CD4-positive, alpha-beta memory T cell (primary cell): ENCODE measurements at regions of chr3 and their contacts with region 1.

Region 1: DNA sequence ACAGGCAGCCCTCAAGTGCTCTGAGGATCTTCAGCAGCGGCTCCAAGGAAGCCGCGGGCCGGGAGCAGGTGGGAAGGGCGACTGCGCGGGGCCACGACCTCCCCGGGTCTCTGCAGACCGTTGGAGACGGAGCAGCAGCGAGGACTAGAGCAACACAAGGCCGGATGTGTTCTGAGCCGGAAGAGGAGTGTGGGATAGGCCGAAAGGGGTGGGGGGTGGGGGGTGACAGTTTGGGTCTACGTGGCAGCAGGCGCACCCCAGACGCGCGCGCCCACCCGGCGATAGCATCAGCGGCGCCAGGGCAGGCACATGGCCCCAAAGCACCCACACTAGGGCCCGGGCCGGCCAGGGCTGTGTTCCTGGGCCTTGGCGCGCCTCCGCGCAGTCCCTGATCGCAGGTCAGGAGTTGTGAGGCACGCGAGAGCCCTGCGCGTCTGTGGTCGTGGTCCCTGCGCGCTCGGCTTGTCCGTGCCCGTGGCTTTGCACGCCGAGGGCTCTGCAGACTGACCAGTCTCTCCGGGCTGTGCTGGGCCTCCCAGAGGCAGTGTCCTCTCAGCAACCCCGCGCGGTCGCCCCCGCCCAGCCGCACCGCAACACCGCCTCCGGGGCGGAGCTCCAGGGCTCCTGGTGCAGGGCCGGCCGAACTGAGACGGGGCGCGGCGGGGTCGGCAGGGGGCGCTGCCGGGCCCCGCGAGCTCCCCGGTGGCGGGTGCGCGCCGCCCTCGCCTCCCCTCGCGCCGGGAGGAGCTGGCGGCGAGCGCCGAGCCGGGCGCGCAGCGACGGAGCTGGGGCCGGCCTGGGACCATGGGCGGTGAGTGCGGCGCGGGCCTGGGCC is at the start of gene PXYLP1:
- DNase-seq: peak; percentile 88 to 90 (median 89)
- H3K4me3 ChIP-seq: peak within 1 kb of the TSS; percentile 38 to 93
- H3K4me3 Mint-ChIP-seq: peak within 1 kb of the TSS; percentile 87 to 98 (median 93)
- H3K27ac ChIP-seq: peak within 1 kb of the TSS; percentile 81
- H3K27ac Mint-ChIP-seq: peak within 1 kb of the TSS; percentile 92 to 98 (median 96)
- H3K4me1 ChIP-seq: peaks cover 27% of the 10 kb centered on the region
- H3K4me1 Mint-ChIP-seq: peaks cover 28 to 59% (median 43%) of the 10 kb centered on the region in 4 donors
- H3K27me3 ChIP-seq: no peaks in the 10 kb centered on the region
- H3K27me3 Mint-ChIP-seq: peaks cover 0 to 2% of the 10 kb centered on the region in 2 donors
- total RNA-seq, gene PXYLP1: 17.2 to 22.6 TPM

Region 2: DNA sequence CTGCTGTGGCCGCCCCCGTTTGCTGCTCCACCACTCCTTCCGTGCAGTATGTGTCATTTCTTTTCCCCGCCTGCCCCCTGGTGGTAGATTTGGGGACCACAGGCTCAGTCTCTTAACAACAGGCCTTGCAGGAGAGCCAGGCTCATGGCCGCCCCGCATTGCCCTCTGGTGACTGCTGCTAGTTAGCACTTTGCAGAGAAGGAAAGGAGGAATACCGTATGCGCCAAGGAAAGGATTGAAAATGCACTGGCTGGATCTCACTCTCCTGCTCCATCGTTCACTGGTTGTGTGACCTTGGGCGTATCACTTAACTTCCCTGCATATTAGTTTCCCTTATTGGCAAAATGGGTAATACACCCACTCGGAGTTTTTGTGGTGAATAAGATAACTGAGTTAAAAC is 39.0 kb before region 1 on chr3:
- CTCF ChIA-PET with region 1: interaction called, 6 read pairs
- POLR2A ChIA-PET with region 1: interaction called, 3 read pairs
- intact Hi-C with region 1: loop called (anchors 2 kb)
- DNase-seq: peak; percentile 91 to 93 (median 91)
- H3K4me3 ChIP-seq: no peak overlapping the region
- H3K4me3 Mint-ChIP-seq: no peak overlapping the region
- H3K27ac ChIP-seq: no peak overlapping the region
- H3K27ac Mint-ChIP-seq: peak overlapping the region in 5 of 7 donors; percentile 2 to 78 (median 33)
- H3K4me1 ChIP-seq: peaks cover 6% of the 10 kb centered on the region
- H3K4me1 Mint-ChIP-seq: peaks cover 5 to 14% (median 9%) of the 10 kb centered on the region in 4 donors
- H3K27me3 ChIP-seq: no peaks in the 10 kb centered on the region
- H3K27me3 Mint-ChIP-seq: peaks cover 13 to 14% of the 10 kb centered on the region in 2 donors

Region 3: DNA sequence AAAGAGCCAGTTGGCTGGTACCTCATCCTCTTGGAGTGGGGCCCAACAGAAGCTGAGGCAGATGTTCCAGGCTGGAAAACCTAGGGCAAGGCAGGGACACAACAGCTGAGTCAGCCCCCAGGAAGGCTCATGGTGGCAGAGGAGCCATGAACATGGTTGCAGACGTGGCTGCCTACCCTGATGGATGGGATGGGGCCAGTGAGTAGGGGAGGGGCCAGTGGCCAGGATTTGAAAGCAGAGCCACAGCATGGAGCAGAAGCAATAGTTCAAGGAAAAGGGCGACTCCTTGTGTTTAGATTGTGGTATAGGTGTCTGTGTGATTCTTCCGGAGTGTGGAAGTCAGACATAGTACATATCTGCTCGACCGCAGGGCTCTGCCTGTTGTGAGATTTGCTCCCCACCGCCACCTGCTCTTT is 24.5 kb after region 1 on chr3:
- CTCF ChIA-PET with region 1: interaction called, 180 read pairs
- POLR2A ChIA-PET with region 1: interaction called, 34 read pairs
- intact Hi-C with region 1: loop called (anchors 1 kb)
- DNase-seq: peak; percentile 55 to 62 (median 56)
- H3K4me3 ChIP-seq: no peak overlapping the region
- H3K4me3 Mint-ChIP-seq: peak overlapping the region in 4 of 8 donors; percentile 5 to 58 (median 12)
- H3K27ac ChIP-seq: no peak overlapping the region
- H3K27ac Mint-ChIP-seq: peak overlapping the region in 6 of 7 donors; percentile 2 to 77 (median 32)
- H3K4me1 ChIP-seq: no peaks in the 10 kb centered on the region
- H3K4me1 Mint-ChIP-seq: peaks cover 11 to 15% (median 12%) of the 10 kb centered on the region in 4 donors
- H3K27me3 ChIP-seq: no peaks in the 10 kb centered on the region
- H3K27me3 Mint-ChIP-seq: no peaks in the 10 kb centered on the region

Region 4: GRCh38 chr3:141279077-141279967 is 48.0 kb after region 1 on chr3:
- CTCF ChIA-PET with region 1: interaction called, 47 read pairs
- POLR2A ChIA-PET with region 1: interaction called, 40 read pairs
- intact Hi-C with region 1: loop called (anchors 1 kb)
- DNase-seq: peak in 4 of 5 donors; percentile 24 to 39 (median 26)
- H3K4me3 ChIP-seq: no peak overlapping the region
- H3K4me3 Mint-ChIP-seq: peak overlapping the region in 2 of 8 donors; percentile 2 to 14
- H3K27ac ChIP-seq: no peak overlapping the region
- H3K27ac Mint-ChIP-seq: peak overlapping the region in 2 of 7 donors; percentile 36 to 48
- H3K4me1 ChIP-seq: peaks cover 18% of the 10 kb centered on the region
- H3K4me1 Mint-ChIP-seq: peaks cover 16 to 25% (median 19%) of the 10 kb centered on the region in 4 donors
- H3K27me3 ChIP-seq: no peaks in the 10 kb centered on the region
- H3K27me3 Mint-ChIP-seq: no peaks in the 10 kb centered on the region

Region 5: DNA sequence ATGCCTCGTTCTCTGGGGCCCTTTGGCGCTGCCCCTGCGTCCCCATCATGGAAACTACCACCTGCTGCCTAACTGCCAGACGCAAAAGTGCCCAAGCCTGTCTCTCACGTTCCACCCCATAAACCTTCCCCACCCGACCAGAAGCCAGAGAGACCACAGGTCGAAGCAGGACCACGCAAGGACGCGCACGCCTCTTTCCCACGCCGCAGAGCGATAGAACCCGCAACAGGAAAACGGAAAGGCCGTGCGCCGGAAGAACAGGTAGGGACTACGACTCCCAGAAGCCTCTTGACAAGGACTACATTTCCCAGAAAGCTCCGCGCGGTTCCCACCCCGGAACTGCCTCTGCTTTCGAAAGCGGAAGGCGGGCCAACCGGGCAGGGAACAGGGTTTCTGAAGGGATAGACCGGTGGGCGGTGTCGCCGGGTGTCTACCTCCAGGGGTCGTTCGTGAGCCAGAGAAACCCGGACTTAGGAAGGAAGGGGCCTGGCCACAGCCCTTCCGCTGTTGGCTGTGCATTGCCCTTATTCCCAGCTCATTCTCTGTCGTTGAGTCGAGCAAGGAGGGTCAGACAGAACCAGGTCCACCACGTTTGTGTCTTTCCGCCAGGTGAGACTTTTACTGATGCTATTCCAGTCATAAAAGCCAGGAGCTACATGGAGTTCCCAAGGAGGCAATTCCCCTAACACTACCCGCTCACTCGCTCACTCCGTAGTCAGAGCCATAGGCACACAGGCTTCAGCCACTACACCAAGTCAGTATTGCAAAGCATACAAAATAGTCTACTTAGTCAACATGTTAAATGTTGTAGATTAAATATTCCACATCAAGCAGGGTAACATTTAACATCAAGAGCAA is 80.4 kb after region 1 on chr3:
- CTCF ChIA-PET with region 1: interaction called, 5 read pairs
- POLR2A ChIA-PET with region 1: interaction called, 16 read pairs
- intact Hi-C with region 1: no loop called
- DNase-seq: peak; percentile 97 to 99 (median 98)
- H3K4me3 ChIP-seq: peak overlapping the region; percentile 68 to 73
- H3K4me3 Mint-ChIP-seq: peak overlapping the region; percentile 92 to 100 (median 98)
- H3K27ac ChIP-seq: peak overlapping the region; percentile 66
- H3K27ac Mint-ChIP-seq: peak overlapping the region; percentile 89 to 99 (median 97)
- H3K4me1 ChIP-seq: peaks cover 46% of the 10 kb centered on the region
- H3K4me1 Mint-ChIP-seq: peaks cover 32 to 60% (median 49%) of the 10 kb centered on the region in 4 donors
- H3K27me3 ChIP-seq: no peaks in the 10 kb centered on the region
- H3K27me3 Mint-ChIP-seq: no peaks in the 10 kb centered on the region

Region 6: GRCh38 chr3:142578327-142579223 is 1347.3 kb after region 1 on chr3 and contains the start of gene ATR:
- CTCF ChIA-PET with region 1: no interaction called
- POLR2A ChIA-PET with region 1: interaction called, 3 read pairs
- intact Hi-C with region 1: loop called (anchors 10 kb)
- DNase-seq: peak; percentile 95 to 96 (median 96)
- H3K4me3 ChIP-seq: peak within 1 kb of the TSS; percentile 90 to 100
- H3K4me3 Mint-ChIP-seq: peak within 1 kb of the TSS; percentile 93 to 99 (median 98)
- H3K27ac ChIP-seq: peak within 1 kb of the TSS; percentile 94
- H3K27ac Mint-ChIP-seq: peak within 1 kb of the TSS; percentile 91 to 99 (median 99)
- H3K4me1 ChIP-seq: peaks cover 44% of the 10 kb centered on the region
- H3K4me1 Mint-ChIP-seq: peaks cover 41 to 66% (median 52%) of the 10 kb centered on the region in 4 donors
- H3K27me3 ChIP-seq: no peaks in the 10 kb centered on the region
- H3K27me3 Mint-ChIP-seq: peaks cover 2 to 4% of the 10 kb centered on the region in 2 donors
- total RNA-seq, gene ATR: 42.3 to 45.6 TPM